GM23248 (cell line): ENCODE measurements at regions of chr6 and their contacts with region 1.

Region 1: GRCh38 chr6:141562851-141563763 is 569.6 kb upstream of the GJE1 start:
- DNase-seq: peak; percentile 87
- H3K4me3 ChIP-seq: peak overlapping the region; percentile 52
- H3K27ac ChIP-seq: peak overlapping the region; percentile 69
- H3K4me1 ChIP-seq: peaks cover 24% of the 10 kb centered on the region
- H3K27me3 ChIP-seq: no peaks in the 10 kb centered on the region

Region 2: GRCh38 chr6:140052756-140053729 is 1510.1 kb before region 1 on chr6:
- in situ Hi-C with region 1: loop called (anchors 25 kb)
- DNase-seq: peak; percentile 65
- H3K4me3 ChIP-seq: no peak overlapping the region
- H3K27ac ChIP-seq: peak overlapping the region; percentile 90
- H3K4me1 ChIP-seq: peaks cover 38% of the 10 kb centered on the region
- H3K27me3 ChIP-seq: no peaks in the 10 kb centered on the region

Region 3: DNA sequence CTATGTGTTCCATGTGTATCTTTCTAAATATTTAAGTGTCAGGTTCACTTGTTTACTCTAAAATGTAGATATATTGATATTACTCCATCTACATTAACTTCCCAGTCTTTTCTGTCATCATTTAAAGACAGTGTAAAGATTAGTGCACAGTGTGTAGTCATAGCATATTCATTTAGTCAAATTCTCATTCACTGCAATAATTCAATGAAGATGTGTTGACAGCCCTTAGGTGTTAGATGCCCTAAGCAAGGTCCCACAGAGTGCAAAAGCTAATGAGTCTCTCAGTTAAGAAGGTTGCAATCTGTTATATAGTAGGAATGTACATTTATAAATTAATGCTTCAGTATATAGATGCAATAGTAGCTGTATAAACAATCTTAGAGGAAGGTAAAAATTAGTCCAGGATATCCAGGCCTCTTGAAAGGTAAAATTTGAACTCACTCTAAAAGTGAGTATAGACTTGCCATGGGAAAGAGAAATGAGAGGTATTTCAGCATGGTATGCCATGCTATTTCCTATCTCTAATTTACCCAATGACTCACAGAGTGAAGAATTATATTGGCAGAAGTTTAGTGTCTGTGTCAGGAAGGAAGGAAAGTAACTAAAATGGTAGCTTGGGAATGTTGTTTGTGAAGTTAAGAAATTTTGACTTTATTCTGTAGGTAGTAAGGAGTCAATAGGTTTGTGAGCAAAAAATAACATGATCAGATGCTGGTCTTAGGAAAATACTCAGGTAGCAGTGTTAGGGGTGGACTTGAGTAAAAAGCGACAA is 1218.8 kb before region 1 on chr6:
- in situ Hi-C with region 1: no loop called
- DNase-seq: peak; percentile 70
- H3K4me3 ChIP-seq: no peak overlapping the region
- H3K27ac ChIP-seq: peak overlapping the region; percentile 29
- H3K4me1 ChIP-seq: peaks cover 42% of the 10 kb centered on the region
- H3K27me3 ChIP-seq: no peaks in the 10 kb centered on the region

Region 4: DNA sequence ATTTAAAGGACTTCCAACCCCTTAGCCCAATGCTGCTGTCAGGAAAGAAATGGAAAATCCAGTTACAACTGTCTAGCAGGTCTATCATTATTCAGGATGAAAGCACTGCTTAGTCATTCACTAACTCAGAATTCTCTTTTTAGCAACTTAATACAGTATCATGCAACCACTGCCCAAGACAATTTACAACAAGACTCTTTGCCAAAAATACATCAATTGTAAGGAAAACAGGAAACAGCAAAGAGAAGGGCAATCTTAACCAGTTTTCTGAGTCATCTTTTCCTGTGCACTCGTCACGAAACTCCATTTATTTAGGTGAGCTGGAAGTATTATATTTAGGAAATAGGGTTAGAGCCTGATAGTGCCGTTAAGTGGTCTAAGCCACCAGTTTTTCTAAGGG is 991.0 kb before region 1 on chr6:
- in situ Hi-C with region 1: loop called (anchors 25 kb)
- DNase-seq: peak; percentile 94
- H3K4me3 ChIP-seq: no peak overlapping the region
- H3K27ac ChIP-seq: peak overlapping the region; percentile 86
- H3K4me1 ChIP-seq: peaks cover 32% of the 10 kb centered on the region
- H3K27me3 ChIP-seq: no peaks in the 10 kb centered on the region

Region 5: DNA sequence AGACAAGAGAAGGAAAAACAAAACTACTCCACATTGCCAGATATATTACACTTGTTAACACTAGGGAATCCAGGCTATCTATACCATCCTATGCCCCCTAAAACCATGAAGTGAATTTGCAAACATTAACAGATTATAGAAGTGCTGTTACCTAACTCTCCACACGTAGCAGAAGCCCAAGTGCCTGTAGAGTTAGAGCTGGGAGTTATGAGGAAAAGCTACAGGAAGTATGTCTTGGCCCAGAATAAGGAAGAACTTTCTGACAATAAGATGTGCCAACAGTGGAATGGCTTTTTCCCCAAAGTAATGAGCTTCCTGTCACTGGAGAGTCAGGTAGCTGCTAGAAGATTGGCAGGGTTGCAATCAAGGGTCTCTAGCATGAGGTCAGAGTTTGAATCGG is 771.2 kb after region 1 on chr6:
- in situ Hi-C with region 1: no loop called
- DNase-seq: no peak
- H3K4me3 ChIP-seq: no peak overlapping the region
- H3K27ac ChIP-seq: no peak overlapping the region
- H3K4me1 ChIP-seq: no peaks in the 10 kb centered on the region
- H3K27me3 ChIP-seq: no peaks in the 10 kb centered on the region